Activated CD8-positive, alpha-beta memory T cell treated with anti-CD3 and anti-CD28 coated beads, Interleukin-2, amount 10 ng/mL, durations not matched to agents 7 days and 5 days (primary cell): ENCODE measurements at regions of chr9 and their contacts with region 1.

Region 1: GRCh38 chr9:4339357-4339756 is 39.5 kb upstream of the GLIS3 start:
- DNase-seq: peak; percentile 85
- ATAC-seq: peak; percentile 86
- H3K4me3 Mint-ChIP-seq: no peak overlapping the region
- H3K27ac Mint-ChIP-seq: peak overlapping the region; percentile 66
- H3K4me1 Mint-ChIP-seq: peaks cover 3% of the 10 kb centered on the region
- H3K27me3 Mint-ChIP-seq: no peaks in the 10 kb centered on the region

Region 2: GRCh38 chr9:4315582-4316215 is 23.7 kb before region 1 on chr9:
- CTCF ChIA-PET with region 1: interaction called, 30 read pairs
- DNase-seq: peak; percentile 80
- ATAC-seq: peak; percentile 84
- H3K4me3 Mint-ChIP-seq: no peak overlapping the region
- H3K27ac Mint-ChIP-seq: no peak overlapping the region
- H3K4me1 Mint-ChIP-seq: no peaks in the 10 kb centered on the region
- H3K27me3 Mint-ChIP-seq: peaks cover 24% of the 10 kb centered on the region